Aorta (tissue), 5 donors: ENCODE measurements at regions of chr9 and their contacts with region 1.

Region 1: GRCh38 chr9:6197330-6197729 is 18.3 kb upstream of the IL33 start:
- DNase-seq: no peak
- ATAC-seq: peak; percentile 76
- H3K4me3 ChIP-seq: no peak overlapping the region
- H3K27ac ChIP-seq: no peak overlapping the region
- H3K4me1 ChIP-seq: no peaks in the 10 kb centered on the region
- H3K27me3 ChIP-seq: no peaks in the 10 kb centered on the region

Region 2: DNA sequence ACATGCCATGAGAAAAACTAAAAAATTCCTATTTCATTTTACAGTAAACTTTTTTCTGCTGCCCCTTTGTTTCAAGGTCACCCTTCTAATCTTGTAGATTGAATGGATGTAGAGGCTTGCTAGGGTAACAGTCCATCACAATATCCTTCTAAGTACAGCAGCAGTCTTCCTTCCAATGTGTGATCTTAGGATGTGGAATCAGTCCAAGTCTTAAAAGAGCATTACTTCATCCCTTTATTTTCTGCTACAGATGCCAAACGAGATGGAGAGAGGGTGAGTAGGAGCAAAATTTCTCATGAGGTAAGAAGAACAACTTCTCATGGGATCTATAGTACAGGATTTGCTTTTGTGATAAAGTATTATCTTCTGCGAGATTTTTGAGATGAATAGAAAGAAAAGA is 17.6 kb after region 1 on chr9:
- intact Hi-C with region 1: loop called in 1 of 2 experiments (anchors 1 kb)
- DNase-seq: no peak
- ATAC-seq: peak; percentile 65
- H3K4me3 ChIP-seq: no peak overlapping the region
- H3K27ac ChIP-seq: no peak overlapping the region
- H3K4me1 ChIP-seq: peaks cover 0 to 4% of the 10 kb centered on the region in 2 donors
- H3K27me3 ChIP-seq: no peaks in the 10 kb centered on the region